Activated T-helper 1 cell treated with anti-CD3 and anti-CD28 coated beads, Interleukin-12 subunit alpha, Interleukin-12 subunit beta, Interleukin-2, Interleukin-4 antibody, amounts not matched to agents 30 ng/mL and 10 ng/mL and 1 ng/mL, durations not matched to agents 14 hours and 24 hours and 36 hours (primary cell): ENCODE measurements at regions of chr1 and their contacts with region 1.

Region 1: GRCh38 chr1:112369392-112370285 is 26.4 kb upstream of the CTTNBP2NL start:
- DNase-seq: peak; percentile 69
- H3K4me3 Mint-ChIP-seq: no peak overlapping the region
- H3K27ac Mint-ChIP-seq: no peak overlapping the region
- H3K4me1 Mint-ChIP-seq: peaks cover 5% of the 10 kb centered on the region
- H3K27me3 Mint-ChIP-seq: peaks cover 37% of the 10 kb centered on the region

Region 2: GRCh38 chr1:112040891-112041740 is 328.5 kb before region 1 on chr1:
- intact Hi-C with region 1: no loop called
- DNase-seq: no peak
- H3K4me3 Mint-ChIP-seq: no peak overlapping the region
- H3K27ac Mint-ChIP-seq: no peak overlapping the region
- H3K4me1 Mint-ChIP-seq: no peaks in the 10 kb centered on the region
- H3K27me3 Mint-ChIP-seq: peaks cover 10% of the 10 kb centered on the region

Region 3: DNA sequence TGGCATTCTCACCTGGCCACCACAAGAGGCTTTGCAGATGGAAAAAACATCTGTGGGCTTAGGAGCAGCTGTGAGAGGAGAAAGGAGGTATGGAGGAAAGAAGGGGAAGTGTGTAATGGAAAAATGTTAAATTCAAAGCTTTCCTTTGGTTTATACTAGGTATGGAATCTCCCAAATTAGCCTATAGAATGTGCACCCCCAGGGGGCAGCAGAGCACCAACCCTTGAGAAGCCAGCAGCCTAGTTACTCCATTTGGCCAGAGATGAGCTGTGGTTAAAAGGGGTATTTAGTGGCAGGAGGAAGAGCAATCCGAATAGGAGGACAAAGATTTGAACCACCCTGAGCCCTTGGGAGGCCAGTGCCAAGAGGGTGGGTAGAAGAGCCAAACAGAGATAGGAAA is 71.1 kb before region 1 on chr1:
- intact Hi-C with region 1: loop called (anchors 2 kb)
- DNase-seq: no peak
- H3K4me3 Mint-ChIP-seq: no peak overlapping the region
- H3K27ac Mint-ChIP-seq: no peak overlapping the region
- H3K4me1 Mint-ChIP-seq: no peaks in the 10 kb centered on the region
- H3K27me3 Mint-ChIP-seq: no peaks in the 10 kb centered on the region

Region 4: GRCh38 chr1:112358798-112359408 is 10.7 kb before region 1 on chr1:
- intact Hi-C with region 1: loop called (anchors 1 kb)
- DNase-seq: no peak
- H3K4me3 Mint-ChIP-seq: no peak overlapping the region
- H3K27ac Mint-ChIP-seq: no peak overlapping the region
- H3K4me1 Mint-ChIP-seq: no peaks in the 10 kb centered on the region
- H3K27me3 Mint-ChIP-seq: peaks cover 28% of the 10 kb centered on the region